ENCODE measurements at regions of chr10 and their contacts with region 1.

Region 1: DNA sequence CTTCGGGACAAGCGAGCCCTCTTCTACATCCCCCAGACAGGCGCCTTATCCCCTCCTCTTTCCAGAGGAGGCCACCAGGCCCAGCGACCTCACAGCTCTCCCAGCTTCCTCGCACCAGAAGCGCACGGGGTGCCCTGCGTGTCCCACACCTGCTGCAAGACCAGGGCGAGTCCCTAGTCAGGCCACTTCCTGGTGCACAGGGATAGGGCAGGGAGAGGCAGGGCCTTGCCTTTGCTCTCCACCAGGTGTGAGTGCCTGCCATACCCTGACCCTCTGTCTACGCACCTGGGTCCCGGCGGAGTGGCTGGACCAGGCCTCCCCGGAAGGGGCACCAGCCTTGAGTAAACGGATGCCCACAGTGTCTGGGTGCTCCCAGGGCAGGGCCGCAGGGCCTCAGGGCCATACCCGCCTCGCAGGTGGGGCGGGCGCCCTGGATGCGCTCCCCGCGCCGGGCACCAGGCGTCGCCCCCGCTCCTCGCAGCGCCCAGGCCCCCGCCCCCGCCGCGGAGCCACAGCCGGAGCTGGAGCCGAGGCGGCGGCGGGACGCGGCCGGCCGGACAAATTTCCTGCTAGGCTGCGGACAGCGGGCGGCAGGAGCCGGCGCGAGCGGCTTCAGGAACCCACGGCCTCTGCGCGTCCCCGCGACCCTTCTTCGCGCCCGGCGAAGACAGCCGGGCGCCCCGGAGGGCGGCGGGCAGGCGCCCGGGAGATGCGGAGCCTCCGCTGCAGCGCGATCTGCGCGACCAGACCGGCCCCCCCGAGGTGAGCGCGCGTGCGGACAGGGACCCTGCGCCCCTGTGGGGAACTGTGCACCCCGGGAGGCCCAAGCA is at the start of gene PTPRE:
- DNase-seq: peak; percentile 83
- H3K4me3 ChIP-seq: peak within 1 kb of the TSS; percentile 44 to 85 (median 80)
- H3K27ac ChIP-seq: peak within 1 kb of the TSS; percentile 85 to 95 (median 92)
- H3K4me1 ChIP-seq: peaks cover 0 to 42% (median 29%) of the 10 kb centered on the region in 4 donors
- H3K27me3 ChIP-seq: no peaks in the 10 kb centered on the region
- CTCF ChIP-seq: peak; percentile 62 to 97 (median 84)
- EP300 ChIP-seq: no peak
- POLR2A ChIP-seq: peak; percentile 68
- total RNA-seq, gene PTPRE: 25.7 to 43.6 (median 26.7) TPM

Region 2: DNA sequence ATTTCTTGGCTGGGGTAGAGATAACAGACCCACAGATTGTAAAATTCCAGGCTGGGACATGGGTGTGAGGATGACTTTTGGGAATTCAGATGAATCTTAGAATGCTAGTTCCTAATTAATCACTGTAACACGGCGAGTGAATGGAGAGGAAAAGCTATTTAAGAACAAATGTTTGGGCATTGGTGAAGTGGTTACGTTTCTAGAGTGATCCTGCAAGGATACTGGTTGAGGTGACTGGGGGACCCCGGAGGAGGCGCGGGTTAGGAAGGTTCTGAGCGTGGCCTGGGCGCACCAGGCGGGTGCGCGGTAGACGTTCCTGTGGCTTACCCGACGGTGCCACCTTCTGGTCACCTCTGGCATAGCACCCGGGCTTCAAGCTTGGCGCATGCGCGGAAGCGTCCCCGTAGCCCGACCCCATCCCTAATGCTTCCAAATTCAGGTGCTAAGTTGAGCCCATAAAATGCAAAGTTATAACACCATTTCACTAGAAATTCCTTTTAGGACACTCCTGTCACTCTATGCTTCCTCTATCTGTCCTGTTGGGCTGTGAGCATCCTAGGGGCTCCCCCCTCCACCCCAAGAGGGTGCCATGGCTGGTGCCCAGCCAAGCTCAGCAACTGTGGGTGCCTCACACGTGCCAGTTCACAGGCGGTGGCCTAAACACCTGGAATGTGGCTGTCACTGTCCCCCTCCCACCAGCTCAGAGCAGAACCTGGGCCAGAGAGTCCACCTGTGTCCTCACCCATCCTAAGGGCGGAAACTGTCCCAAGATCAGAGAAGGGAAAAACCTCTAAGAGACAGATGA is 104.6 kb after region 1 on chr10:
- in situ Hi-C with region 1: loop called in 2 of 4 experiments (anchors 10 to 25 kb)
- intact Hi-C with region 1: loop called (anchors 2 kb)
- DNase-seq: peak; percentile 86
- H3K4me3 ChIP-seq: no peak overlapping the region
- H3K27ac ChIP-seq: no peak overlapping the region
- H3K4me1 ChIP-seq: peaks cover 0 to 14% (median 2%) of the 10 kb centered on the region in 4 donors
- H3K27me3 ChIP-seq: no peaks in the 10 kb centered on the region
- CTCF ChIP-seq: peak; percentile 95 to 99 (median 97)
- EP300 ChIP-seq: no peak
- POLR2A ChIP-seq: no peak

Region 3: DNA sequence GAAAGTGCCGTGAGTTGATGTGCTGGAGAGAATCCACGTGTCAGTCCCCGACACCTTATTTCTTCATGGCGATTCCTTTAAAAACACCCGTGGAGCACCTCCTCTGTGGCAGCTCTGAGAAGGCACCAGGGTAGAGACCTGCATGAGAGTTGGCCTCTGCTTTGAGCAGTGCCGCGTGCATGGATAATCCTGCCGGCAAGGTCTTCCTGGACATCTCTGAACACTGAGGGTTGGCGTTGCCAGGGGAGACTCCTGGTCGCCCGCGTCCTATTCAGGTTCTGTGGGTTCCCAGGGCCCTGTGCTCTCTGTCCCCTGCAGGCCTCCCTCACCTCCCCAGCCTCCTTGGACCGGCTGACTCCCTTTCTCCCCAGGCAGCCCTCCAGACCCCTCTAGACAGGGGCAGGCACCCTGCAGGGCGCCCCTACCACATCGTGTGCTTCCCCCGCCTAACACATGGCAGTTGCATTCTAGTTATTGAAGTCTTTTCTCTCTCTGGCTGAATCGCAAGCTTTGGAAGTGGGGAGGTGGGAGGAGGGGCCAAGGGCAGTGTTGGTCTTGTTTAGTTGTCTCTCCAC is 123.8 kb after region 1 on chr10:
- in situ Hi-C with region 1: no loop called
- intact Hi-C with region 1: no loop called
- DNase-seq: no peak
- H3K4me3 ChIP-seq: no peak overlapping the region
- H3K27ac ChIP-seq: no peak overlapping the region
- H3K4me1 ChIP-seq: no peaks in the 10 kb centered on the region
- H3K27me3 ChIP-seq: no peaks in the 10 kb centered on the region
- CTCF ChIP-seq: no peak
- EP300 ChIP-seq: no peak
- POLR2A ChIP-seq: no peak

Region 4: GRCh38 chr10:128069351-128070051 is 162.7 kb after region 1 on chr10:
- in situ Hi-C with region 1: loop called in 1 of 4 experiments (anchors 10 kb)
- intact Hi-C with region 1: no loop called
- DNase-seq: peak; percentile 80
- H3K4me3 ChIP-seq: no peak overlapping the region
- H3K27ac ChIP-seq: no peak overlapping the region
- H3K4me1 ChIP-seq: peaks cover 0 to 11% (median 0%) of the 10 kb centered on the region in 4 donors
- H3K27me3 ChIP-seq: no peaks in the 10 kb centered on the region
- CTCF ChIP-seq: peak; percentile 79 to 88 (median 83)
- EP300 ChIP-seq: no peak
- POLR2A ChIP-seq: no peak

Measured in transverse colon (tissue), 4 donors.